A549 (cell line): ENCODE measurements at regions of chr13 and their contacts with region 1.

Region 1: DNA sequence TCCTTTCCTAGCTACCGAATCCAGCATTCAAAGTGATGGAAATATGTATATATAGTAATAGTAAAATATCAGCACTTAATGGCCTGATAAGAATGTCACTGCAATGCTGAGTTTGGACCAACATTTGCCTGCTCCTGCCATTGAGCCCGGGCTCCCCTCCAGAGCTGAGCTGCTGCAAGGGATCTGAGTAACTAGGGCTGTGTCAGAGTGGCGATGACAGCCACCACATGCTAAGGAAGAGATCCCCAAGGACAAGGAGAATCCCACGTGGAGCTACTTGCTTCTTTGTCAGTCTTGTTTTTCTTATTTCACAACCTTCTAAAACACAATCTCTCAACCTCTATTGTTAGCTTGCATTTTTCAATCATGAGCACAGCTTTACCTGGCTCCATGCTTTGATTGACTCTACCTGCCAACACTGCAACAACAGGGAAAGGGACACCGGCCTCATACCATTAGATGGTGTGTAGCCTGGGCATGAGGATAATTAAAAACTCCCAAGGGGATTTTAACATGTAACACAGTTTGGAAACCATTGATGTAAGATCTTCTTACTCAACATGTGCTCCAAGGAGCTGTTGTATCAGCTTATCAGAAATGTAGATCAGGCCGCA is 19.4 kb upstream of the ALOX5AP start:
- DNase-seq: no peak
- ATAC-seq: no peak
- H3K4me3 ChIP-seq: no peak overlapping the region
- H3K27ac ChIP-seq: peak overlapping the region; percentile 15 to 54; a peak in 2 of 6 replicates
- H3K4me1 ChIP-seq: peaks cover 28% of the 10 kb centered on the region
- CTCF ChIP-seq: no peak
- EP300 ChIP-seq: no peak
- POLR2A ChIP-seq: no peak
- RAD21 ChIP-seq: no peak

Region 2: GRCh38 chr13:30705680-30706079 is 10.3 kb before region 1 on chr13:
- CTCF ChIA-PET with region 1: interaction called, 21 read pairs
- POLR2A ChIA-PET with region 1: no interaction called
- DNase-seq: peak in 1 of 2 experiments; percentile 5
- ATAC-seq: no peak
- H3K4me3 ChIP-seq: no peak overlapping the region
- H3K27ac ChIP-seq: no peak overlapping the region
- H3K4me1 ChIP-seq: no peaks in the 10 kb centered on the region
- CTCF ChIP-seq: no peak
- EP300 ChIP-seq: no peak
- POLR2A ChIP-seq: no peak
- RAD21 ChIP-seq: no peak

Region 3: DNA sequence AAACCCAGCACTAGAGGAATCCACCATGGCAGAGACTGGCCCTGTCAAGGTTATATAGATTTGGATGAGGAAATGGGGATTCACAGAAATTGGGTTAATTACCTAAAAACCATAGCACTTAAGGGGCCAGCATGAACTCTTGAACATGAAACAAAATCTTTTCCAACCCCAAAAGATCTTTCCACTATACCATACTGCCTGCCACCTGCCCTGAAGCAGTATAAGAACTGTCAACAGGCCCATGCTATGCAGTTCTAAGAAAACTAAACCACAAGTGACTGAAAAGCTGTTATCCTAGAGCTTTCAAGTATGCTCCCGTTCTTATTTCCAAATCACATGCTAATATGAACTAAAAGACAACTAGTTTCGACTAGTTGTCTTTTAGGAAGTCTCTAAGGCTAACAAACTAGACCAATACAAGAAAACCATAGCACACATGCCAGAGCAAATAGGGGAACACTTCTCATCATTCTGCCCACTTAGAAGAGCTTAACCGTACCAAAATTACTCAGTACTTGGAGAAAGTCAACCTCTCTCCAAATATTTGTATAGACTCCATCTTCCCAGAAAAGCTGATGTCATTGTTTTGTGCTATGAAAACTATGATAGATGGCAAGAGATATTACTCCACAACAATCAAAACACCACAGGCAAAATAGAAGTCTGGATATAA is 418.2 kb after region 1 on chr13:
- CTCF ChIA-PET with region 1: no interaction called
- POLR2A ChIA-PET with region 1: no interaction called
- DNase-seq: no peak
- ATAC-seq: no peak
- H3K4me3 ChIP-seq: no peak overlapping the region
- H3K27ac ChIP-seq: no peak overlapping the region
- H3K4me1 ChIP-seq: no peaks in the 10 kb centered on the region
- CTCF ChIP-seq: no peak
- EP300 ChIP-seq: no peak
- POLR2A ChIP-seq: no peak
- RAD21 ChIP-seq: no peak